Esophagus muscularis mucosa (tissue), 4 donors: ENCODE measurements at regions of chr10 and their contacts with region 1.

Region 1: GRCh38 chr10:11045995-11046775 is 28.5 kb downstream of the CELF2 start:
- DNase-seq: no peak
- H3K4me3 ChIP-seq: peak overlapping the region in 3 of 4 donors; percentile 2 to 13 (median 7)
- H3K27ac ChIP-seq: peak overlapping the region; percentile 46 to 76 (median 59)
- H3K4me1 ChIP-seq: peaks cover 58 to 82% (median 63%) of the 10 kb centered on the region in 4 donors
- H3K27me3 ChIP-seq: no peaks in the 10 kb centered on the region
- CTCF ChIP-seq: no peak
- EP300 ChIP-seq: no peak
- POLR2A ChIP-seq: no peak

Region 2: GRCh38 chr10:10869592-10869991 is 176.6 kb before region 1 on chr10:
- intact Hi-C with region 1: no loop called
- DNase-seq: no peak
- H3K4me3 ChIP-seq: no peak overlapping the region
- H3K27ac ChIP-seq: no peak overlapping the region
- H3K4me1 ChIP-seq: peaks cover 23 to 34% (median 28%) of the 10 kb centered on the region in 4 donors
- H3K27me3 ChIP-seq: no peaks in the 10 kb centered on the region
- CTCF ChIP-seq: no peak
- EP300 ChIP-seq: no peak
- POLR2A ChIP-seq: no peak

Region 3: DNA sequence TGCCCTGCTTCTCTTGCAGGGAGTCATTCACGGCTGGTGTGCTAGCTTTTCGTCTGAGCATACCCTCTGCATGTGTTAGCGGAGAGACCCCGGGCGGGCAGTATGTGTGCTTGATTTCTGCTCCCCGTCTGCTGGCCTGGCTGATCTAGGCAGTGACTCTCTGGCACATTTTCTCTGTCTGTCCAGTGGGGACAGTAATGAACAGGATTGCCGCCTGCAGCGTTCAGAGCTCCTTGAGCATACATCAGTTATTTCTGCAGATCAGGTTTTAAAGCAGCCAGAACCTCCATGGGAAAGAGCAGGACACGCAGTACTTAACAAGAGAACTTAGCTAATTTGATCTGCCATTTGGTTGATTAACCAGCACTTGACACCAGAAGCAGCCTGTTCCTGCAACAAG is 214.0 kb after region 1 on chr10:
- intact Hi-C with region 1: loop called (anchors 10 kb)
- DNase-seq: no peak
- H3K4me3 ChIP-seq: no peak overlapping the region
- H3K27ac ChIP-seq: no peak overlapping the region
- H3K4me1 ChIP-seq: peaks cover 38 to 75% (median 61%) of the 10 kb centered on the region in 4 donors
- H3K27me3 ChIP-seq: no peaks in the 10 kb centered on the region
- CTCF ChIP-seq: no peak
- EP300 ChIP-seq: no peak
- POLR2A ChIP-seq: no peak